ENCODE measurements at regions of chr3 and their contacts with region 1.

Region 1: GRCh38 chr3:33318709-33319380 is 41.6 kb downstream of the FBXL2 start:
- DNase-seq: peak; percentile 26
- ATAC-seq: peak; percentile 31; the same call in 1 of the 2 replicates
- H3K4me3 ChIP-seq: no peak overlapping the region
- H3K27ac ChIP-seq: no peak overlapping the region
- H3K4me1 ChIP-seq: peaks cover 38% of the 10 kb centered on the region
- H3K27me3 ChIP-seq: no peaks in the 10 kb centered on the region
- CTCF ChIP-seq: peak; percentile 37

Region 2: DNA sequence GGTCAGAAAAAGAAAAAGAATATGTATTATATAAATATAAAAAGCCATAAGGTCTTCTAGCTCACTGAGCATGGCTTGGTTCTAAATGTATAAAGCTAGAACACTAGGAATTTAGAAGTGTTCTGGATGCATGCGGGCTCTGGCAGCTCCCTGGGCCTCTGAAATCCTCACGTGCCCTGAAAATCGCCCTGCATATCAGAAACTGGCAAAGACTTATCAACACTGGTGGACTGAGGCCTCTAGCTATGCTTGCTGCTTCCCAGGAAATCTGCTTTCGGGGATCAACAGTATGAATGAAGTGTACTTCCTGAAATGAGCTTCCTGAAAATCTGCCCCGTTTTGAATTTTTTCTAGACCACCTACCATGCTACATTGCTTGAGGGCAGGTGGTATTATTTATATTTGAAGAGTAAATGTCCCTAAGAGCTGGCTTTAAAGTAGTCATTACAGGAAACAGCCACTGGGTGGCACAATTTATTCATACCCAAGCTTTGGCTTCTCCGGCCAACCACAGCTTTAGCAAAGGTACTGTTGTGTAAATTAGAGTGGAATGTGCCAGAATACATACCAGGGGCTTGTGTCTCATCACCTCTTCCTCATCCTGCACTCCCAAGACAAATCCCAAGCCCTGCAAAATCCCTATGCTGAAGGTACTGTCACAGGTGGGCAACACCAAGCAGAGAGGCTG is 187.4 kb before region 1 on chr3:
- CTCF ChIA-PET with region 1: no interaction called
- POLR2A ChIA-PET with region 1: no interaction called
- intact Hi-C with region 1: loop called (anchors 2 kb)
- DNase-seq: peak; percentile 85
- ATAC-seq: peak; percentile 83
- H3K4me3 ChIP-seq: no peak overlapping the region
- H3K27ac ChIP-seq: no peak overlapping the region
- H3K4me1 ChIP-seq: 0 out of 2 replicates have a peak, but pooled peaks cover 3% of the 10 kb centered on the region
- H3K27me3 ChIP-seq: no peaks in the 10 kb centered on the region
- CTCF ChIP-seq: peak; percentile 94

Region 3: DNA sequence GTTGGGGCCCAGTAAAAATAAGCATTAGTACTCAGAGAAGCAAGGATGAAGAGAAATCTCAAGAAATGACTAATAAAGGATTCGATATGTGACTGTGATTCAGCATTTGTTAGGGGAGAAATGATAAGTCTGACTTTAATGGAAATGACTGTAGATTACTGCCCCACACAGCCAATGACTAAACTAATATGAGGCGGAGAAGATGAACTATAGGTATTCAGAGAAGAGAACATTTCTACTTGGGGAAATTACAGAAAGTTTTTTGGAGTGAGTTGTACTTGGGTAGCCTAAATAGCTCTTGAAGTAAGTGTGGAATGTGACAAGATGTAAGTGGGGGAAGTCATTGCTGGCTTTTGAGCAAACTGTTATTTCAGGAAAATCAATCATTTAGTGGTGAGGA is 859.6 kb after region 1 on chr3:
- CTCF ChIA-PET with region 1: no interaction called
- POLR2A ChIA-PET with region 1: no interaction called
- intact Hi-C with region 1: no loop called
- DNase-seq: no peak
- ATAC-seq: no peak
- H3K4me3 ChIP-seq: no peak overlapping the region
- H3K27ac ChIP-seq: no peak overlapping the region
- H3K4me1 ChIP-seq: peaks cover 4% of the 10 kb centered on the region; the same call in 1 of the 2 replicates
- H3K27me3 ChIP-seq: no peaks in the 10 kb centered on the region
- CTCF ChIP-seq: no peak

Measured in PC-3 (cell line).